HEK293T (cell line): ENCODE measurements at regions of chr16 and their contacts with region 1.

Region 1: GRCh38 chr16:79519448-79519847 is 81.1 kb downstream of the MAF start:
- DNase-seq: no peak

Region 2: GRCh38 chr16:79601931-79602627 is 82.6 kb after region 1 on chr16:
- CTCF ChIA-PET with region 1: interaction called, 11 read pairs
- POLR2A ChIA-PET with region 1: no interaction called
- DNase-seq: peak; percentile 53

Region 3: DNA sequence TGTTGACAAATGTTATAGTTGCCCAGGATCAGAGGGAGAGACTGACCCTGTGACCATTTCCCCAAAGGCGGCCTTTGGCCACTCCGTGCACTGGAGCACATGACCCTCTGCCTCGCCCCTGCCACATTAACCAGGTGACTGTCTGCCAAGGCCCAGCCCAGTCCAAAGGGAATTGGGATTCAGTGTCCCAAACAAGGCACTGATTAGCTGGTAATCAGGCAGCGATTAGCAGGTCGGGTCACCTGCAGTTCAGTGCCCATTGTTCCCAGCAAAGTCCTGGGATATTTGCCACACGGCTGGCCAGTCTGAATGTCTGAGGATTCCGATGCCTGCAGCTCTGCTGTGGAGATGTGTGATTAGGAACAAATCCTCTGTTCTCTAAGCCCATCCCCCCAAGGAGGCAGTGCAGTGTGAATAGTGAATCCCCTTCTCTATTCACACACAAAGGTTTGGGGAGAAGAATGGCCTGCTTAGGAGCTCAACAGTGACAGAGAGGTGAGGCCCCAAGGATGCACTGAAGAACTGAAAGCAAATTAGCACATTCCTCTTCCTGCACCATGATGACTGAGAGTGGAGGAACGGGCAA is 204.2 kb after region 1 on chr16:
- CTCF ChIA-PET with region 1: no interaction called
- POLR2A ChIA-PET with region 1: no interaction called
- DNase-seq: no peak